Activated CD4-positive, alpha-beta T cell treated with anti-CD3 and anti-CD28 coated beads for 36 hours (primary cell): ENCODE measurements at regions of chr3 and their contacts with region 1.

Region 1: GRCh38 chr3:42502429-42503250 is at the start of gene VIPR1:
- DNase-seq: peak; percentile 96
- ATAC-seq: peak; percentile 95
- H3K4me3 Mint-ChIP-seq: peak within 1 kb of the TSS; percentile 83
- H3K27ac Mint-ChIP-seq: peak within 1 kb of the TSS; percentile 71
- H3K4me1 Mint-ChIP-seq: peaks cover 46% of the 10 kb centered on the region
- H3K27me3 Mint-ChIP-seq: peaks cover 16% of the 10 kb centered on the region
- total RNA-seq, gene VIPR1: 6.6 to 6.7 TPM

Region 2: DNA sequence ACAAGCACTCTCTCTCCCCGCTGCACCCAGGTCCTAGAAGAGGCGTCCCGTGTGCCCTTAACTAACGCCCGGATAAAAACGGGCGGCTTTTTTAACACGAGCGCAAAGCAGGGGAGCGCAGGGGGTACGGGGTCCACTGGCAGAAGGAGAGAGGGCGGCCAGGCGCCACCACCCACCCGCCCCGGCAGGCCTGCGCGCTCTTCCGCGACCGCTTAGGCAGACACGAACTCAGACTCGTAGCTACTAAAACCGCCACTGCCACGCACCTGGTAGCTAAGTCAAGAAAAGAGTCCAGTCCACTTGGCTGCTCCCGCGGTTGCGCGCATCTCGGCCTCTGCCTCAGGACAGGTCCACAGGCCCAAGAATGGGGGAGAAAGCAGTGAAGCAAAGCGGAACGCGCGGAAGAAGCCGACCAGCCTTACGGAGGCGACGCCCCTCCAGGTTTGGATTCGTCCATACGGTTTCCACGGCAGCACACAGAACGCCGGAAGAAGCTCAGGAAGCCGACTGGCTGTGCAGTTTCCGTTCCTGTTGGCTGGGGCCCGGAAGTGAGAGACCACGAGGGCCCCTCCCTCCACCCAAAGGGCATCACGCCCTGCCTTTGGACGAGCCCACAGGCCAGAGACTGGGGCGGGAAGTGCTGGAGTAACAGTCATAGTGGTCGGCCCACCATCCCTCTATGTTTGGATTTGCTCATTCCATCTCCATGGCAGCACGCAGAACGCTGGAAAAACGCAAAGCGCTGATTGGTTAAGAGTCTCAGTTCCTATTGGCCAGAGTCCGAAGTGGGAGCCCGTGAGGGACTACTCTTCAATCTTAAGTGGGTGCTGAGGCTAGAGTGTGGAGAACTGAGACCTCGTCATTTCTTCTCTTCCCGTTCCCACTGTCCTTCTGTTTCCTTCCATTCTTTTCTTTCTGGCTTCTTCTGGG is 540.6 kb before region 1 on chr3 and contains the start of gene ULK4:
- CTCF ChIA-PET with region 1: no interaction called
- POLR2A ChIA-PET with region 1: no interaction called
- intact Hi-C with region 1: loop called in 1 of 2 experiments (anchors 5 kb)
- DNase-seq: peak; percentile 96
- ATAC-seq: peak; percentile 91
- H3K4me3 Mint-ChIP-seq: peak within 1 kb of the TSS; percentile 95
- H3K27ac Mint-ChIP-seq: peak within 1 kb of the TSS; percentile 92
- H3K4me1 Mint-ChIP-seq: peaks cover 13% of the 10 kb centered on the region
- H3K27me3 Mint-ChIP-seq: no peaks in the 10 kb centered on the region
- total RNA-seq, gene ULK4: 13.1 to 14.2 TPM

Region 3: DNA sequence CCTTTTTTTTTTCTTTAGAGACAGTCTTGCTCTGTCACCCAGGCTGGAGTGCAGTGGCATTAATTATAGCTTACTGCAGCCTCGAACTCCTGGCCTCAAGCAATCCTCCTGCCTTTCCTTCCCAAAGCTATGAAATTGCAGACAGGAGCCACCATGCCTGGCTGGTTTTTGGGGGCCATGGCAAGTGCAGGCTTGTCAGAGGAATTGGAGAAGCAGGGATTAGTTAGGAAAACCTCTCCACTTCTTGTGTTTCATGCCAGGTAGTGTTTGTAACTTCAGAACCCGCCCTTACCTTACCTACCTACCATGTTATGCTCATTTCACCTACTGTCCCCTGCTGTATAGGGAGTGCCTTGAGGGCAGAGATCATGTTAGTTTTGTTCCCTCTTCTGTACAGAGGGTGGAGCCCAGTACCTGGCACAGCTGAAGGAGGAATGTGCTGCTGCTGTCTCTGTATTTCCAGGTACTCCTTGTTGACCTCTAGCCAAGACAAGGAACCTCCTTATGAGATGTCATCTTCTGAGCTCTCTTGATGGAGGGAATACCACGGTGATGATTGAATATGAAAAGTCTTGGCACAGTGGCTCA is 367.7 kb before region 1 on chr3:
- CTCF ChIA-PET with region 1: no interaction called
- POLR2A ChIA-PET with region 1: no interaction called
- intact Hi-C with region 1: no loop called
- DNase-seq: no peak
- ATAC-seq: no peak
- H3K4me3 Mint-ChIP-seq: no peak overlapping the region
- H3K27ac Mint-ChIP-seq: no peak overlapping the region
- H3K4me1 Mint-ChIP-seq: no peaks in the 10 kb centered on the region
- H3K27me3 Mint-ChIP-seq: no peaks in the 10 kb centered on the region

Region 4: DNA sequence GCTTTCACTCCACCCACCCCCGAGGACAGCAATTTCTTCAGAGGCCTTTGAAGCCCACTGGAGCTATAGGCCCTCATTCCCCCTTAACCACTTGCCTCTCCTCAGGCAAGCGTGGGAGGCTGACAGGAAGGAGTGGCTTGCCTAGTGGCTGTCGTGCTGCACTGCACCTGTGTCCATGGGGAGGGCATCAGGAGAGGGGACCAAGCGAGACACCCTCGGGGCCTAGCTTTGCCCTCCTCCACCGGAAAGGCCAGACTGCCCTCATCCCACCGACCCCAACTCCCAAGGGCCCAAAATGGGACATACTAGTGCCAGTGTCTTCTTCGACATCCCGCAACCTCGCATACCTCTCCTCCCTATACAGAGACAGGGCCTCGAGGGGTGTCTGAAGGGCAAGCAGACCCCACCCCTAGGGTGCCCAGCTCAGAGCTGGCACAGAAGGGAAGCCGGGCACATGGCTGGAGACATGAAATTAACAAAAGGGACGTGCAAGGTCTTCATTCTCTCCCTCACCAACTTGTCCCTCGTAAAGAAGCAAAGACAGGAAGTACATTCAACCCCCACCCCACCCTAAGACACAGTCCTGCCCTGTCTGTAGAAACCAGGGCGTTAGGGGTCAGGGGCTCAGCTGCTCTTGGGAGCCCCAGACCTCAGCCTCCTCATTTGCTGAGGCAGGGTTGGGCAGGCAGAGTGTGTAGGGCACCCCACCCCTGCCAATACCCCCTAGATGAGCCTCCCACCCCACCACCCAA is 24.2 kb after region 1 on chr3:
- CTCF ChIA-PET with region 1: interaction called, 51 read pairs
- POLR2A ChIA-PET with region 1: interaction called, 3 read pairs
- intact Hi-C with region 1: no loop called
- DNase-seq: peak; percentile 77
- ATAC-seq: peak; percentile 88
- H3K4me3 Mint-ChIP-seq: no peak overlapping the region
- H3K27ac Mint-ChIP-seq: peak overlapping the region; percentile 86
- H3K4me1 Mint-ChIP-seq: peaks cover 64% of the 10 kb centered on the region
- H3K27me3 Mint-ChIP-seq: no peaks in the 10 kb centered on the region

Region 5: GRCh38 chr3:42581709-42582473 is 79.3 kb after region 1 on chr3 and contains the start of gene SEC22C:
- CTCF ChIA-PET with region 1: interaction called, 3 read pairs
- POLR2A ChIA-PET with region 1: no interaction called
- intact Hi-C with region 1: loop called in 1 of 2 experiments (anchors 1 kb)
- DNase-seq: peak; percentile 98
- ATAC-seq: peak; percentile 94
- H3K4me3 Mint-ChIP-seq: peak within 1 kb of the TSS; percentile 81
- H3K27ac Mint-ChIP-seq: peak within 1 kb of the TSS; percentile 94
- H3K4me1 Mint-ChIP-seq: peaks cover 43% of the 10 kb centered on the region
- H3K27me3 Mint-ChIP-seq: no peaks in the 10 kb centered on the region
- total RNA-seq, gene SEC22C: 34.2 to 42.5 TPM

Region 6: DNA sequence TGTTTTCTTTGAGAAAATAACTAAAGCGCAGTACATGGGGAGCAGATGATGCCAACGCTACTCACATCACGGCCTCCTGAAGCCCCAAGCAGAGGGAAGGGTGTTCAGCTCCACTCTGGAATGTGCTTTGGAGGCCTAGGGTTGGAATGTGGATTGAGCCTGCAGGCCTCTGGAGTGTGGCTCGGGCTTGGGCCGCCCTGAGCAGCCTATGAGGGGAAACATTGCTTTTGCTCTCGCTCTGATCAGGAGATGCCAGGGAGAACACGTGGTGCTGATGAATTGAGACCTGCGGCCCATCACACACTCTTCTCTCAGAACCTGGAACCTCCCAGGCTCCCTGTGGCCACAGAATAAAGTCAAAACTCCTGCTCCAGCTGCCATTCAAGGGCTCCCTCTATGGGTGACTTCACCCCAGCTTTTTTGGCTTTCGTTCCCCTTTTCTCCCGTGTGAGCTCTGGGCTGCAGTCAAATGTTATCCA is 247.2 kb after region 1 on chr3:
- CTCF ChIA-PET with region 1: interaction called, 4 read pairs
- POLR2A ChIA-PET with region 1: no interaction called
- intact Hi-C with region 1: loop called in 1 of 2 experiments (anchors 2 kb)
- DNase-seq: peak; percentile 33
- ATAC-seq: peak; percentile 55
- H3K4me3 Mint-ChIP-seq: no peak overlapping the region
- H3K27ac Mint-ChIP-seq: no peak overlapping the region
- H3K4me1 Mint-ChIP-seq: peaks cover 30% of the 10 kb centered on the region
- H3K27me3 Mint-ChIP-seq: no peaks in the 10 kb centered on the region

Region 7: GRCh38 chr3:42880601-42881451 is 378.2 kb after region 1 on chr3:
- CTCF ChIA-PET with region 1: no interaction called
- POLR2A ChIA-PET with region 1: no interaction called
- intact Hi-C with region 1: loop called in 1 of 2 experiments (anchors 1 kb)
- DNase-seq: peak; percentile 95
- ATAC-seq: peak; percentile 99
- H3K4me3 Mint-ChIP-seq: peak overlapping the region; percentile 66
- H3K27ac Mint-ChIP-seq: peak overlapping the region; percentile 82
- H3K4me1 Mint-ChIP-seq: peaks cover 7% of the 10 kb centered on the region
- H3K27me3 Mint-ChIP-seq: no peaks in the 10 kb centered on the region